WTC11 (cell line): ENCODE measurements at regions of chr6 and their contacts with region 1.

Region 1: DNA sequence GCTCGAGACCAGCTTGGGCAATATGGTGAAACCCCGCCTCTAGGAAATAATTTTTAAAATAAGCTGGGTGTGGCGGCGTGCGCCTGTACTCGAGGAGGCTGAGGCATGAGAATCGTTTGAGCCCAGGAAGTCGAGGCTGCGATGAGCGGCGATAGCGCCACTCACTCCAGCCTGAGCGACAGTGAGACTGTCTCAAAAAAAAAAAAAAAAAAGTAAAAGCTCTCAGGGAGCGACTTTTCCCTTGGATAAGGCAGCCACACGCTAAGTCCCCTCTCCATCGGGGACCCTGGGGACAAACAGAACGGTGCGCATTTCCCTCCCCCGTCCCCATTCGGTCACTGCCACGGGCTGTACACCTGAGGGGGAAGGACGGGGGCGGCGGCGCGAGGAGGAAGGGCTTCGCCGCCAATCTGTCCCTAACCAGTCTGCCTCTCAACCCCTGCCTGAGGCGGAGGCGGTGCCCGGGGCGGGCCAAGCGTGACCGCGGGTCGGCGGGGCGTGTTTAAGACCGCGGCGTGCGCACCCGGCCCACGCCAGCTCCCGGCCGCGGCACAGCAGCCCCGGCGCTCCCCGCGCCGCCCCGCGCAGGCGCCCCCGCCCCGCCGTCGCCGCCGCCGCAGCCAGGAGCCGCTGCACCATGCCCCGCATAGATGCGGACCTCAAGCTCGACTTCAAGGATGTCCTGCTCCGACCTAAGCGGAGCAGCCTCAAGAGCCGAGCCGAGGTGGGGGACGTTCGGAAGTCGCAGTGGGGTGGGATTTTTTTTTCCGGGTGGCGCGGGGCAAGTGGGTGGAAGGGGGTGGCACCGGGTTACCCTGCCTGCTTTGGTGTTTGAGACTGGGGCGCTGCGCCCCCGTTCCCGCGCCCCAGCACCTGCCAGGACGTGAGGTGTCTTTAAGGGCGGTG is at the start of gene GMPR:
- DNase-seq: peak; percentile 50
- ATAC-seq: peak; percentile 62
- H3K4me3 Mint-ChIP-seq: peak within 1 kb of the TSS; percentile 69
- H3K27ac Mint-ChIP-seq: no peak within 1 kb of the TSS
- H3K4me1 Mint-ChIP-seq: peaks cover 9% of the 10 kb centered on the region; the same call in 1 of the 2 replicates
- H3K27me3 Mint-ChIP-seq: peaks cover 53% of the 10 kb centered on the region
- CTCF ChIP-seq: no peak
- total RNA-seq, gene GMPR: 2.2 to 2.8 TPM (median 2.4 TPM) in 3 replicates

Region 2: GRCh38 chr6:16190214-16190613 is 48.1 kb before region 1 on chr6:
- CTCF ChIA-PET with region 1: no interaction called
- POLR2A ChIA-PET with region 1: no interaction called
- DNase-seq: no peak
- ATAC-seq: no peak
- H3K4me3 Mint-ChIP-seq: no peak overlapping the region
- H3K27ac Mint-ChIP-seq: no peak overlapping the region
- H3K4me1 Mint-ChIP-seq: no peaks in the 10 kb centered on the region
- H3K27me3 Mint-ChIP-seq: no peaks in the 10 kb centered on the region
- CTCF ChIP-seq: no peak

Region 3: GRCh38 chr6:16277101-16277981 is 39.0 kb after region 1 on chr6:
- CTCF ChIA-PET with region 1: interaction called, 27 read pairs
- POLR2A ChIA-PET with region 1: no interaction called
- DNase-seq: peak; percentile 82
- ATAC-seq: peak; percentile 99
- H3K4me3 Mint-ChIP-seq: no peak overlapping the region
- H3K27ac Mint-ChIP-seq: peak overlapping the region; percentile 77
- H3K4me1 Mint-ChIP-seq: peaks cover 9% of the 10 kb centered on the region
- H3K27me3 Mint-ChIP-seq: no peaks in the 10 kb centered on the region
- CTCF ChIP-seq: no peak

Region 4: DNA sequence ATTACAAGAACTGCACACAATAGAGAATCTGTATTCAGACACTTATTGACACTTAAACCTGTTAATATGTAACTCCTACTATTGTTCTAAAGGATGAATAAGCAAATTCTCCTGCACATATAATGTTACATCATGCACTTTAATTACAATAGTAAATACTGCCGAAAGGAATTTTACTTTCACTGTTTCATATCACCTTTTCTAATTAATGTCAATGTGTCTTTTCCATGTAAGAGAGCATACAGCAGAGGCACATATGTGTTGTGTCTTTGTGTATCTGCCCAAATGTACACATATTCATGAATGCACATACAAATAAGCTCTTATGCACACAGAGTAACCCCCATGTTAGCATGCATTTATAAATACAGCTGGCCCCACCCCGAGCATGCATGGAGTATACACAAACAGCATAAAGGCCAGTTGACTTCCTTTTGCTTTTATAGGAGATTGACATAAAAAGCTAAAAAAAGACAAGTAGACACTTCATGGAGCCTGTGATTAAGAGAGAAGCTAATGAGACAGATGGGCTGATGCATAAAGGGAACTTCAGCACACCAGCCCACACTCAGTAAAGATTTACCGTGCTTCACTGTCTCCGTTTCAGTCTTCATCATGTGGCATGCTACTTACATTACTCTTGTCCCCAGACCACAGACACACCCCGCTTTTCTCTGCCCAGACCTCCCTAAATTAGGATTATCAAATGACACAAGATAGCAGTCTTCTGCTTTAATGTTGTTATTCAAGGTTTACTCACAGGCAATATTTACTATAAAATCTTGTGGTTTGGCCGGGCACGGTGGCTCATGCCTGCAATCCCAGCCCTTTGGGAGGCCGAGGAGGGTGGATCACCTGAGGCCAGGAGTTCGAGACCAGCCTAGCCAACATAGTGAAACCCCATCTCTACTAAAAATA is 338.4 kb after region 1 on chr6:
- CTCF ChIA-PET with region 1: no interaction called
- POLR2A ChIA-PET with region 1: no interaction called
- DNase-seq: no peak
- ATAC-seq: no peak
- H3K4me3 Mint-ChIP-seq: no peak overlapping the region
- H3K27ac Mint-ChIP-seq: no peak overlapping the region
- H3K4me1 Mint-ChIP-seq: no peaks in the 10 kb centered on the region
- H3K27me3 Mint-ChIP-seq: no peaks in the 10 kb centered on the region
- CTCF ChIP-seq: no peak